B cell (primary cell): ENCODE measurements at regions of chr9 and their contacts with region 1.

Region 1: DNA sequence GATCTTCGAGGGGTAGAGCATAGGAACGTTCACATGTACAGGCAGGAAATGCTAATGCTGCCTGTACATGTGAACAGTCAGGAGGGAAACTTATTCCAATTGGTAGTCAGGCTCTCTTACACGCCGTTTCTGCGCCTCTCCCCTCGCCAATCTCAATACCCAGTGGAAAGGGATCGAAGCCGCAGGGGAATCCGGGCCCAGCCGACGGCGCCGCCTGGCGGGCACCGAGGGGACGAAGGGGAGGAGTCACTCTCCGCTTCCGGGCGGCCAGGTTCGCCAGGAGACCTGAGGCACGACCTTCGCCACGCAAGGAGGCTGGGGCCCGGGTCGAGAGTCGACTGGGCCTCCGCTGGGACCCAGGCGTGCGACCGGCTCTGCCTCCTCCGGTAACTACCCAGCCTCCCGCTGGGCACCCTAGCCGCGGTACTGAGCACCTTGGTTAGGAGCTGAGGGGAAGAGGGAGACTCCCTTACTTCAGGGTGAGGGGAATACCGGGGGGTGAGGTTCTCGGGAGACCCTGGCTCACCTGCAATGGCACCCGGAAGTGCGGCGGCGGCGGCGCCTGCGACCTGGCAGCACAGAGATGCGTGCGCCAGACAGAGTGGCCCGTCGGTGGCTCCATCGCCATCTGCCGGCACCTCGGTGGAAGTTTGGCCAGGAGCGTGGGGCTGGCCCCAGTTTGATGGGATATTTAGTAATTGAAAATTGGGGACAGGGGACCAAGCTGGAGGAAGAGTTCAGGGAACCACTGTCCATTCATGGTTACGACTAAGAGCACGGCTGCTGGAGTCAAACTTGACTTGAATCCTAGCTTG is at the start of gene PIGO:
- DNase-seq: peak; percentile 94
- ATAC-seq: peak; percentile 92
- H3K4me3 ChIP-seq: peak within 1 kb of the TSS; percentile 61 to 100 (median 93)
- H3K4me3 Mint-ChIP-seq: peak within 1 kb of the TSS; percentile 90
- H3K27ac ChIP-seq: peak within 1 kb of the TSS; percentile 99
- H3K27ac Mint-ChIP-seq: peak within 1 kb of the TSS; percentile 94
- H3K4me1 ChIP-seq: peaks cover 7 to 16% of the 10 kb centered on the region in 2 donors
- H3K4me1 Mint-ChIP-seq: peaks cover 34% of the 10 kb centered on the region
- H3K27me3 ChIP-seq: no peaks in the 10 kb centered on the region
- H3K27me3 Mint-ChIP-seq: no peaks in the 10 kb centered on the region
- CTCF ChIP-seq: peak; percentile 85
- total RNA-seq, gene PIGO: 32.5 and 34.7 TPM in 2 replicates

Region 2: GRCh38 chr9:35111001-35111933 is 15.0 kb after region 1 on chr9:
- CTCF ChIA-PET with region 1: interaction called, 18 read pairs
- POLR2A ChIA-PET with region 1: interaction called, 3 read pairs
- intact Hi-C with region 1: loop called (anchors 1 kb)
- DNase-seq: peak; percentile 96
- ATAC-seq: peak; percentile 77
- H3K4me3 ChIP-seq: peak overlapping the region; percentile 32 to 74 (median 59)
- H3K4me3 Mint-ChIP-seq: peak overlapping the region; percentile 88
- H3K27ac ChIP-seq: peak overlapping the region; percentile 80 to 83
- H3K27ac Mint-ChIP-seq: peak overlapping the region; percentile 93
- H3K4me1 ChIP-seq: peaks cover 33 to 45% of the 10 kb centered on the region in 2 donors
- H3K4me1 Mint-ChIP-seq: peaks cover 58% of the 10 kb centered on the region
- H3K27me3 ChIP-seq: no peaks in the 10 kb centered on the region
- H3K27me3 Mint-ChIP-seq: no peaks in the 10 kb centered on the region
- CTCF ChIP-seq: no peak